A549 (cell line): ENCODE measurements at regions of chr7 and their contacts with region 1.

Region 1: GRCh38 chr7:122528879-122529481 is 169.9 kb downstream of the RNF133 start:
- DNase-seq: peak; percentile 7 to 43
- ATAC-seq: no peak
- H3K4me3 ChIP-seq: no peak overlapping the region
- H3K27ac ChIP-seq: no peak overlapping the region
- H3K4me1 ChIP-seq: no peaks in the 10 kb centered on the region
- CTCF ChIP-seq: peak; percentile 59
- EP300 ChIP-seq: no peak
- POLR2A ChIP-seq: no peak
- RAD21 ChIP-seq: peak; percentile 50 to 51; a peak in 3 of 5 replicates

Region 2: DNA sequence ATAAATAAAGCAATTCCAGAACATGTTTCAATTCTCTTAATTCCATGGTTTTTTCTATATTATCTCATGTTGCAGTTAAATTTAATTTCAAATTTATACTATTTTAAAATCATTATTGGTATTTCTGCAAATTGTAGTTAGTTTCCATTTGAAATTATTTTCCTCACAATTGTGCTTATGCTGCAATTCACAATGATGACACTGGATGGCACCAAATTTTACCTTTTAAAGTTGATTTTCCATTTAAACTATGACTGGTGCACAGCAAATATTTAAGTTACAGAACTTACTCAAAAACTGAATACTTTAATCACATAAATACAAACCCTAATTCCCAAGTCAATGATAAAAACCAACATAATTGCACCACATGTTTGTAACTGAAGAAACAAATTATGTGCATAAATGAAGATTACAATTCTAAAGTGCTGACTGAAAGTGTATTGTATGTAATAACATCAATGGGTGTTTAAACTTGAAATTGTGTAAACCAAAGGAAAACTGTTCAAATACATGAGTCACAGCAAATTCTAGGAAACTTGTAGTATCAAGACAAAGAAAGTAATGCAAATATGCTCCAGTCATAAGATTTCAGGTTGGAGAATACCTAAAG is 309.6 kb before region 1 on chr7:
- CTCF ChIA-PET with region 1: interaction called, 25 read pairs
- POLR2A ChIA-PET with region 1: no interaction called
- DNase-seq: peak in 1 of 2 experiments; percentile 10
- ATAC-seq: no peak
- H3K4me3 ChIP-seq: no peak overlapping the region
- H3K27ac ChIP-seq: no peak overlapping the region
- H3K4me1 ChIP-seq: no peaks in the 10 kb centered on the region
- CTCF ChIP-seq: peak; percentile 65
- EP300 ChIP-seq: no peak
- POLR2A ChIP-seq: no peak
- RAD21 ChIP-seq: peak; percentile 67 to 72

Region 3: GRCh38 chr7:122515404-122515803 is 13.6 kb before region 1 on chr7:
- CTCF ChIA-PET with region 1: no interaction called
- POLR2A ChIA-PET with region 1: no interaction called
- DNase-seq: no peak
- ATAC-seq: no peak
- H3K4me3 ChIP-seq: no peak overlapping the region
- H3K27ac ChIP-seq: no peak overlapping the region
- H3K4me1 ChIP-seq: no peaks in the 10 kb centered on the region
- CTCF ChIP-seq: no peak
- EP300 ChIP-seq: no peak
- POLR2A ChIP-seq: no peak
- RAD21 ChIP-seq: no peak